ENCODE measurements at regions of chr7 and their contacts with region 1.

Region 1: GRCh38 chr7:139075031-139075652 is 34.4 kb downstream of the ZC3HAV1 start:
- DNase-seq: peak; percentile 68
- ATAC-seq: peak; percentile 78
- H3K4me3 ChIP-seq: no peak overlapping the region
- H3K27ac ChIP-seq: peak overlapping the region; percentile 65
- H3K4me1 ChIP-seq: peaks cover 29% of the 10 kb centered on the region
- H3K27me3 ChIP-seq: no peaks in the 10 kb centered on the region
- CTCF ChIP-seq: peak; percentile 74
- EP300 ChIP-seq: no peak
- POLR2A ChIP-seq: no peak
- RAD21 ChIP-seq: peak; percentile 39; the same call in 1 of the 2 replicates

Region 2: DNA sequence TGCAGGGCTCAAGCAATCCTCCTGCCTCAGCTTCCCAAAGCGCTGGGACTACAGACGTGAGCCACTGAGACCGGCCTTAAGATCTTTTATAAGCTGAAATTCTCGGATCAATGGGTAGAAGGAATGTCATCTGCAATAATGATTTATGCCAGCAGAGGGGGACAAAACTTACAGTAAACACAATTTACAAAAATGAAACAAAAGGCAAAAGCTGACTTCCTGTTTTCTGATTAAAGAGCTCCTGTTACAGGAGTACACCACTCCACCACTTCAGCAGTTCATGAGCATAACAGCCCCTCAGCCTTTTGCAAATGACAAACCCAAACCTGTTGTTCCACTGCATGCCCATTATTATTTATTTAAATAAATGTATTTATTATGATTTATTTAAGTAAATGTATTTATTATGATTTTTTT is 188.6 kb before region 1 on chr7:
- CTCF ChIA-PET with region 1: interaction called, 3 read pairs
- POLR2A ChIA-PET with region 1: no interaction called
- in situ Hi-C with region 1: no loop called
- intact Hi-C with region 1: loop called (anchors 1 kb)
- DNase-seq: peak; percentile 62
- ATAC-seq: no peak
- H3K4me3 ChIP-seq: no peak overlapping the region
- H3K27ac ChIP-seq: no peak overlapping the region
- H3K4me1 ChIP-seq: peaks cover 59% of the 10 kb centered on the region
- H3K27me3 ChIP-seq: no peaks in the 10 kb centered on the region
- CTCF ChIP-seq: peak; percentile 67
- EP300 ChIP-seq: no peak
- POLR2A ChIP-seq: no peak
- RAD21 ChIP-seq: peak; percentile 31; the same call in 1 of the 2 replicates

Region 3: GRCh38 chr7:139016931-139017511 is 58.1 kb before region 1 on chr7:
- CTCF ChIA-PET with region 1: interaction called, 34 read pairs
- POLR2A ChIA-PET with region 1: interaction called, 4 read pairs
- in situ Hi-C with region 1: no loop called
- intact Hi-C with region 1: loop called (anchors 1 kb)
- DNase-seq: peak; percentile 68
- ATAC-seq: peak; percentile 96
- H3K4me3 ChIP-seq: no peak overlapping the region
- H3K27ac ChIP-seq: no peak overlapping the region
- H3K4me1 ChIP-seq: peaks cover 10% of the 10 kb centered on the region; the same call in 1 of the 2 replicates
- H3K27me3 ChIP-seq: peaks cover 0 to 22% of the 10 kb centered on the region in 2 experiments; a peak in 2 of 5 replicates
- CTCF ChIP-seq: peak; percentile 87
- EP300 ChIP-seq: no peak
- POLR2A ChIP-seq: no peak
- RAD21 ChIP-seq: peak; percentile 60

Region 4: DNA sequence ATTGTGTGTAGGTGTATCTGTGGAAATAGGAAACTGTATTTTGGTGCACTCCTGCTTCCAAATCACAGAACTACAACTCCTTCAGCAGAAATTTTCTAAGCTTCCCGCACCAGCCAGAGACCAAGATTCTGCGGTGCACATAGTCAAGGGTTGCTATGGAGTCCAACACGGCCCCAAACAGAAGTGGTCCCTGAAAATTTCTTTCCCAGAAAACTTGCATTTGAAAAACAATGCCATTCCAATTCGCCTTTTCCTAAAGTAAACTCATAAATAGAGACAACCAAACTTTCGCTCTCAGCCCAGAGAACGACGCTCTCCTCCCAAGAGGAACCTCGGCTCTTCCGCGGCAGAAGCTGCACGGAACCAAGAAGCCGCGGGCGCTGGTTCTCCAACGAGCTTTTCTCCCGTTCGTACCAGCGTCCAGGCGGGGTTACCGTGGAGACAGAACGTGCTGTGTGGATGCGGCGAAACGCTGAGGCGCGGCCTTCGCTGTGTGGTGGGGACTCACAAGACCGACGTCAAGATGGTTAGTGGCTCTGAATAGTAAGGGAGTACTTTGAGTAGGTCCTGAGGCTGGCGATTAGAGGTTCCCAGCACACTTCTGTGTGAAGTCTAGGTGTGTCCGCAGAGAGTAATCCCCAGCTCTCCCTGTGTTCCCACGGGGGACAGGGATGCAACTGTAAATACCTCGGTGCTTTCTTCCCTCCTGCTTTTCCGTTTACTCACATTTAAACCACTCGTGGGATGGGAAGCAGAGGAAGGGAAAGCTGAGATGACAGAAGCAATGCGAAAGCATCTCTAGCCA is 58.4 kb after region 1 on chr7:
- CTCF ChIA-PET with region 1: no interaction called
- POLR2A ChIA-PET with region 1: interaction called, 3 read pairs
- in situ Hi-C with region 1: no loop called
- intact Hi-C with region 1: loop called (anchors 2 kb)
- DNase-seq: peak; percentile 70
- ATAC-seq: peak; percentile 98
- H3K4me3 ChIP-seq: peak overlapping the region; percentile 61 to 80 (median 66)
- H3K27ac ChIP-seq: peak overlapping the region; percentile 1
- H3K4me1 ChIP-seq: peaks cover 29% of the 10 kb centered on the region
- H3K27me3 ChIP-seq: no peaks in the 10 kb centered on the region; a peak in 1 of 5 replicates
- CTCF ChIP-seq: no peak; the same call in 1 of the 2 replicates
- EP300 ChIP-seq: peak in 1 of 2 experiments; percentile 37; a peak in 1 of 4 replicates
- POLR2A ChIP-seq: peak in 1 of 2 experiments; percentile 70; a peak in 3 of 4 replicates
- RAD21 ChIP-seq: peak; percentile 52; the same call in 1 of the 2 replicates

Measured in HepG2 (cell line).